ENCODE measurements at regions of chr1 and their contacts with region 1.

Region 1: DNA sequence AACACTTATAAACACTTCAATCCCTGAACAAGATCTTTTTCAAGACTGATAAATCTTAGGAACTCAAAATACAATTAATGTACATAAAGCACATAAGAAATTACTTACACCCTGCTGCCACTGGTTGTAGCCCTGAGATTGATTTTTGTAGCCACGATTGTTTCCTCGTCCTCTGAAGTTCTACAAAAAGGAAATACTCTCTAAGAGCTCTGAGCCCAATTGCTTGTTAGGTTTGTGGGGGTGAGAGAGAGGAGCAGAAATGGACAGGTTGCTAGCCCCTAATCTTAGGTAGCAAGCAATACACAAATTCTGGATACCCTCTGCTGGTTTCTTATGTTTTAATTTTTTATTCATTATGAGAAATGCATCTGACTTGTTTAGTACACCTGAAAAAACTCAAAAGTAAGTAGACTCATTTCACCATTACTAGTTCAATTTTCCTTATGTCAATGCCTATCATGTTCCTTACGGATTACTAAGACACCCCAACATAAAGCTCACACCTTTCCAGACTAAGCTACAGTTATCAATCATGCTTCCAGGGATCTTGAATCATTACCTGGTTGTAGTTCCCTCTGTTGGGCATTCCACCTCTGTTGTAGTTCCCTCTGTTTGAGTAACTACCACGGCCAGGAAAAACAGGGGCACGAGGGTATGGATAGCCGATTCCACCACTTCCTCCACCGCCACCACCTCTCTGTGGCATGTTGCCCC is 9.3 kb downstream of the HNRNPU start:
- DNase-seq: no peak
- H3K4me3 Mint-ChIP-seq: peak overlapping the region; percentile 74
- H3K27ac Mint-ChIP-seq: peak overlapping the region; percentile 79
- H3K4me1 Mint-ChIP-seq: peaks cover 92% of the 10 kb centered on the region
- H3K27me3 Mint-ChIP-seq: no peaks in the 10 kb centered on the region

Region 2: DNA sequence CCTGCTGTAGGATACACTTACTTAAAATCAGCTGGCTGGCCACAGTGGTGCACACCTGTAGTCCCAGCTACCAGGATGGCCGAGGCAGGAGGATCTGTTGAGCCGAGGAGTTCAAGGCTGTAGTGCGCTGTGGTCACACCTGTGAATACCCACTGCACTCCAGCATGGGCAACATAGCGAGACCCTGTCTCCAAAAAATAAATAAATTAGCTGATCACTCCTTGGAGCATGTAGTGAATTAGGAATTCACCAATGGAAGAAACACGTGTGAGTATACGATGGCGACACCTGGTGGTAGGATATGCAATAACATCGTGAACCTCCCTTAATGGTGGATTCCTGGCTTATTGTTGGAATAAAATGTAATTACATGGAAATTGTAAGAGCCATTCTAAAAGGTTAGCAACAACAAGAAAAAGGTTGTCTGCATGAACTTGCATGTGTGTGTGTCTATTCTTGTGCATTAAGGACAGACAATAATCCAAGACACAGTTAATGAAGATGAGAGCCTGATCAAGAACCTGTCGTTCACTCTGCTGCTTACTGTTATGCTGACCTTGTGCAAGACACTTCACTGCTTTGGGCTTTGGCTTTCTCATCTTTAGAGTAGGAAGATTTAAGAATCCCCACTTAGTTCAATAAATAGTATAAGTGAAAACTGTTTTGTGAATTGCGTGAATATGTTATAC is 58.2 kb before region 1 on chr1:
- intact Hi-C with region 1: no loop called
- DNase-seq: peak; percentile 19
- H3K4me3 Mint-ChIP-seq: no peak overlapping the region
- H3K27ac Mint-ChIP-seq: no peak overlapping the region
- H3K4me1 Mint-ChIP-seq: peaks cover 8% of the 10 kb centered on the region
- H3K27me3 Mint-ChIP-seq: peaks cover 10% of the 10 kb centered on the region

Region 3: GRCh38 chr1:244844155-244845121 is 10.6 kb before region 1 on chr1:
- intact Hi-C with region 1: loop called (anchors 1 kb)
- DNase-seq: no peak
- H3K4me3 Mint-ChIP-seq: no peak overlapping the region
- H3K27ac Mint-ChIP-seq: peak overlapping the region; percentile 65
- H3K4me1 Mint-ChIP-seq: peaks cover 68% of the 10 kb centered on the region
- H3K27me3 Mint-ChIP-seq: no peaks in the 10 kb centered on the region